Posterior vena cava (tissue), 2 donors: ENCODE measurements at regions of chr16 and their contacts with region 1.

Region 1: DNA sequence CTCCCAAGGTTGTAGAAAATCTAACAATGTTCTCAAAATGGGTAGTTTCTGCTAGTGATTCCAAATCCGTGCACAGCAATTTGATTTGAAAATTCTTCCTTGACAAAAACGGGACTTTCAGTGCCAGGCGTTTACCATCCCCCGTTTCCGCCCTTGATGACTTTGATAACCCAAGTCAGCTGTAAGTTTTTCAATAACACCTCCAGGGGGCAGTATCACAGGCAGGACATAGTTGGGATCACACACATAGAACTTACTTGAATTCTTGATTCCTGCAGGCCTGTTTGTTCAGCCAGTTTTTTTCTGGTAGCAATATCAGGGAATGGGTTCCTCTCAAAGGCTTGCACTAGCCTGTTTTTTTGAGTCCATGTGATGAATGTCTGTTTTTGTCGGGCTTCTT is 5.6 kb downstream of the DUXB start:
- DNase-seq: no peak

Region 2: DNA sequence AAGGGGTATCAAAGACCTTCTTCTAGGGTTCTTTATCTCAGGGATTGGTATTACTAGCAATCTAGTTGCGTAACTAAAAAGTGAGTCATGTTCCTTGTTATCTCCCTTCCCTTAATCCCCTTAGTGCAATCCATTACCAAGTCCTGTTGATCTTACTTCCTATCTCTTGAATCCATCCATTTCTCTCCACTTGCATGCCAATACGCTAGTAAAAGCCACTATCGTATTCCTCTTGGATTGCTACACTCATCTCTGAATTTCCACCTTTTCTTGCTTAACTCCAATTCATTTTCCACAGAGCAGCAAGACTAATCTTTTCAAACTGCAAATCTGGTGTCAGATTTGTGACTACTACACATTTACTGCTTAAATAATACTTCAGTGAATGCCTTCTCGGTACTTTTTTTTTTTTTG is 70.8 kb before region 1 on chr16:
- intact Hi-C with region 1: no loop called
- DNase-seq: no peak

Region 3: DNA sequence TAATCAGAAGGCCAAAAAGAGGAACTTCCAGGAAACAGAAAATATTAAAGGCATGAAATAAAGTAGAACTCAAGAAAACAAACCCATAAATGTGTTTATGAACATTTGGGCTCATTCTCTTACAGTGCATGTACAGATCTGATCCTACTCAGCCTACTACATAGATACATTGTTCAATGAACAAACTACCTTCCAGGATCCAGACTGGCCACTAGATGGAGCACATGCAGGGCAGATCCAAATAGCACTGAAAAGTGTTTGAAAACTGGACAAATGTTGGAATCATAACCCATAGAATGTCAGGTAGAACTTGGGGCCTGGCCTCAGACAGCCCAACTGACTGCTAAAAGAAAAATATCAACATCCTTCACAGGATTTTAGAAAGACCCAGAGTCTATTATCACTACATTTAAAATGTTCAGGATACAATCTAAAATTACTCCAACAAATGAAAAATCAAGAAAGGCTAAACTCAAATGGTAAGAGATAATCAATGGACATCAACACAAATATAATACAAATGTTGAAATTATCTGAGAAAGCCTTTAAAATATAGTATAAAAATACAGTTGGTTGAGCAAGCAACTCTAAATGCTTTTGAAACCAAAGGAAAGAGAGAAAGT is 1904.2 kb after region 1 on chr16:
- intact Hi-C with region 1: loop called in 1 of 2 experiments (anchors 5 kb)
- DNase-seq: no peak